Aorta (tissue), 5 donors: ENCODE measurements at regions of chr12 and their contacts with region 1.

Region 1: GRCh38 chr12:72017054-72017651 is 78.5 kb downstream of the TPH2 start:
- DNase-seq: peak in 1 of 2 donors; percentile 51
- ATAC-seq: peak; percentile 89
- H3K4me3 ChIP-seq: no peak overlapping the region
- H3K27ac ChIP-seq: no peak overlapping the region
- H3K4me1 ChIP-seq: no peaks in the 10 kb centered on the region
- H3K27me3 ChIP-seq: no peaks in the 10 kb centered on the region

Region 2: DNA sequence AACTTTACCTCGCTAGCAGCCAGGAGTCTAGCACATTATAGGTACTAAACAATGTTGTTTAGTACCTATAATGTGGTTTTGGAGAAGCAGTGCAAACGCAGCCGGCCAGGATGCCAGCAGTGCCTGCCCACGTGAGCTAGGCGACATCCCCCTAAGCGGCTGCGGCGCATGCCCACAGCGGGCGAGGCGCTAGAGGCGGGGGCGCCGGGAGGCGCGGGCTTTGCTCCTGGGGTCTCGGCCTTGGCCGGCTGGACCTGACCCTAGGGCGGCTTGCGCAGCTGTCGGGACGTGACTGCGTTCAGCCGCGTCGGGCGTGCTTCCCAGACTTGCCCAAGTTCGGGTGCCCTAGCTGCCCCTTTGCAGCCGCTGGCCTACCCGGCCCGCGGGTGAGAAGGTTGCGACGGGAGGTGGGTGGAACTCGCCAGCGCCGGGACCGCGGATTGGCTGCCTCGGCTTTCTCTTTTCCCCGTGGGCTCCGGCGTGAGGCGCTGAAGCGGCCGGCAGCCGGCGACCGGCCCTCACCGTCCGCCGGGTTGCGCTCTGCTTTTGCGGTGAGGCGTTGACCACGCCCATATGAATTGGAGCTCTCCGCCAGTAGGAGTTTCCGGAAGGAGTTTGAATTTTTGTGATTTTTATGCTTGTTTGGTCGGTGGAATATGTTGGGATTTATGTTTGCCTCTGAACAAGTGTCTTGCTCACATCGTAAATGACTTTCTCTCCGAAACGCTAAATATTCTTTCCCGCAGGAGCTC is 331.1 kb before region 1 on chr12 and contains the start of gene TMEM19:
- intact Hi-C with region 1: no loop called
- DNase-seq: peak; percentile 95 to 97
- ATAC-seq: peak; percentile 99
- H3K4me3 ChIP-seq: peak within 1 kb of the TSS; percentile 34 to 73
- H3K27ac ChIP-seq: peak within 1 kb of the TSS in 1 of 2 donors; percentile 49
- H3K4me1 ChIP-seq: peaks cover 0 to 4% of the 10 kb centered on the region in 2 donors
- H3K27me3 ChIP-seq: no peaks in the 10 kb centered on the region
- total RNA-seq, gene TMEM19: 17.6 to 22.8 TPM

Region 3: DNA sequence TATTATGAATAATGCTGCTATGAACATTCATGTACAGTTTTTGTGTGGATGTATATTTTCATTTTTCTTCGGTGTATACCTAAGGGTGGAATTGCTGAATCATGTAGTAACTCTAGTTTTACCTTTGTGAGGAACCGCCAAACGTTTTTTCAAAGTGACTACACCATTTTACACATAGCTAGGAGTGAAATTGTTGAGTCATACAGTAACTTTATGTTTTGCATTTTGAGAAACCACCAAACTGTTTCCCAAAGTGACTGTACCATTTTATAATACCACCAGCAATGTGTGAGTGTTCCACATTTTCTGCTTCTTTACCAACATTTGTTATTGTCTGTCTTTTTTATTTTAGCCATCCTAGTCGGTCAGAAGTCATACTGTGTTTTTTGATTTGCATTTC is 81.6 kb before region 1 on chr12:
- intact Hi-C with region 1: no loop called
- DNase-seq: no peak
- ATAC-seq: no peak
- H3K4me3 ChIP-seq: no peak overlapping the region
- H3K27ac ChIP-seq: no peak overlapping the region
- H3K4me1 ChIP-seq: no peaks in the 10 kb centered on the region
- H3K27me3 ChIP-seq: no peaks in the 10 kb centered on the region

Region 4: GRCh38 chr12:72264548-72265175 is 247.5 kb after region 1 on chr12:
- intact Hi-C with region 1: loop called in 1 of 2 experiments (anchors 10 kb)
- DNase-seq: no peak
- ATAC-seq: no peak
- H3K4me3 ChIP-seq: no peak overlapping the region
- H3K27ac ChIP-seq: no peak overlapping the region
- H3K4me1 ChIP-seq: no peaks in the 10 kb centered on the region
- H3K27me3 ChIP-seq: no peaks in the 10 kb centered on the region